ENCODE measurements at regions of chr9 and their contacts with region 1.

Region 1: GRCh38 chr9:105713260-105714019 is 19.1 kb downstream of the TMEM38B start:
- DNase-seq: no peak
- ATAC-seq: peak; percentile 18
- H3K4me3 ChIP-seq: no peak overlapping the region
- H3K4me3 Mint-ChIP-seq: no peak overlapping the region
- H3K27ac ChIP-seq: no peak overlapping the region
- H3K27ac Mint-ChIP-seq: no peak overlapping the region
- H3K4me1 ChIP-seq: no peaks in the 10 kb centered on the region
- H3K4me1 Mint-ChIP-seq: peaks cover 0 to 14% (median 4%) of the 10 kb centered on the region in 7 donors
- H3K27me3 ChIP-seq: no peaks in the 10 kb centered on the region
- H3K27me3 Mint-ChIP-seq: no peaks in the 10 kb centered on the region

Region 2: DNA sequence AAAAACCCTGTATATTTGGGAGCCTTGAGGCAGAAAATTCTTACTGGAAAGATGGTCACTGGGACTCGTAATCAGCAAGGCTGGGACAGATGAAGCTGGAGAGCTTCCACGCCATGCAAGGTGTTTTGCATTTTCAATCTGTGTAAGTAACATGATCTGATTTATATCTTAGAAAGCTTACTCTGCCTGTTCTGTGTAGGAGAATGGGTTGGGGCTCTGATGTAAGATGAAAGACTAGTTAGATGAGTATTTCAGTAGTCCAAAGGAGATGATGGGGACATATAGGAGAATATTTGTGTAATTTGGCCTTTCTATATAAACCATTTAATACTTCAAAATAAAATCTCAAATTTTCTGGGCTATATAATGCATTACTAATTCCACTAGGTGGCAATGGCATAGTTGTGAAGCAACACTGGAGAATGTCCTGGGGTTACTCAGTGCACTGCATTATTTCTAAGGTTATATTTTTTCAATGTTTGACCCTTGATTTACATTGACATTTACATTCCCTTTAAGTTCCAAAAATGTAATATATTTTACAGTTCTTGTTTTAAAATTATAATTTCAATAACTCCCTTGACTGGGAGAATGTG is 287.5 kb before region 1 on chr9:
- CTCF ChIA-PET with region 1: no interaction called
- POLR2A ChIA-PET with region 1: no interaction called
- intact Hi-C with region 1: loop called (anchors 1 kb)
- DNase-seq: no peak
- ATAC-seq: no peak
- H3K4me3 ChIP-seq: no peak overlapping the region
- H3K4me3 Mint-ChIP-seq: no peak overlapping the region
- H3K27ac ChIP-seq: no peak overlapping the region
- H3K27ac Mint-ChIP-seq: no peak overlapping the region
- H3K4me1 ChIP-seq: no peaks in the 10 kb centered on the region
- H3K4me1 Mint-ChIP-seq: no peaks in the 10 kb centered on the region
- H3K27me3 ChIP-seq: no peaks in the 10 kb centered on the region
- H3K27me3 Mint-ChIP-seq: peaks cover 0 to 4% (median 0%) of the 10 kb centered on the region in 5 donors

Region 3: DNA sequence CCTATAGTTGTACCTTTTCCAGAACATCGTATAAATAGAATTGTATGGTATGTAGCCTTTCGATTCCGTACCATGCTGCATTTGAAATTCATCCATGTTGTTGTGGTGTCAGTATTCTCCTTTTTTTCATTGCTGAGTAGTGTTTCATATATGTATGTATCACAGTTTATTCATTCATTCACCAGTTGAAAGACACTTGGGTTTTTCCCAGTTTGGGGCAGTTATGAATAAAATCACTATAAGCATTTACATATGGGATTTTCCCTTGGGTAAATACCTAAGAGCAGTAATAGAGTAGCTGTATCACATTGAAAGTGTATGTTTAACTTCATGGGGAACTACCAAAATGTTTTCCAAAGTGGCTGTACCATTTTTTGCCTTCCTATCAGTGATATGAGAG is 171.6 kb before region 1 on chr9:
- CTCF ChIA-PET with region 1: no interaction called
- POLR2A ChIA-PET with region 1: no interaction called
- intact Hi-C with region 1: no loop called
- DNase-seq: no peak
- ATAC-seq: no peak
- H3K4me3 ChIP-seq: no peak overlapping the region
- H3K4me3 Mint-ChIP-seq: no peak overlapping the region
- H3K27ac ChIP-seq: no peak overlapping the region
- H3K27ac Mint-ChIP-seq: no peak overlapping the region
- H3K4me1 ChIP-seq: no peaks in the 10 kb centered on the region
- H3K4me1 Mint-ChIP-seq: peaks cover 0 to 3% (median 0%) of the 10 kb centered on the region in 7 donors
- H3K27me3 ChIP-seq: no peaks in the 10 kb centered on the region
- H3K27me3 Mint-ChIP-seq: no peaks in the 10 kb centered on the region

Region 4: GRCh38 chr9:105608721-105609598 is 104.5 kb before region 1 on chr9:
- CTCF ChIA-PET with region 1: interaction called, 13 read pairs
- POLR2A ChIA-PET with region 1: interaction called, 4 read pairs
- intact Hi-C with region 1: loop called (anchors 1 kb)
- DNase-seq: peak in 6 of 9 donors; percentile 11 to 37 (median 30)
- ATAC-seq: peak; percentile 67
- H3K4me3 ChIP-seq: no peak overlapping the region
- H3K4me3 Mint-ChIP-seq: no peak overlapping the region
- H3K27ac ChIP-seq: no peak overlapping the region
- H3K27ac Mint-ChIP-seq: no peak overlapping the region
- H3K4me1 ChIP-seq: no peaks in the 10 kb centered on the region
- H3K4me1 Mint-ChIP-seq: peaks cover 0 to 5% (median 0%) of the 10 kb centered on the region in 7 donors
- H3K27me3 ChIP-seq: no peaks in the 10 kb centered on the region
- H3K27me3 Mint-ChIP-seq: no peaks in the 10 kb centered on the region

Region 5: GRCh38 chr9:105637787-105638395 is 75.5 kb before region 1 on chr9:
- CTCF ChIA-PET with region 1: interaction called, 5 read pairs
- POLR2A ChIA-PET with region 1: no interaction called
- intact Hi-C with region 1: loop called in 1 of 2 experiments (anchors 2 kb)
- DNase-seq: no peak
- ATAC-seq: no peak
- H3K4me3 ChIP-seq: no peak overlapping the region
- H3K4me3 Mint-ChIP-seq: no peak overlapping the region
- H3K27ac ChIP-seq: no peak overlapping the region
- H3K27ac Mint-ChIP-seq: no peak overlapping the region
- H3K4me1 ChIP-seq: no peaks in the 10 kb centered on the region
- H3K4me1 Mint-ChIP-seq: no peaks in the 10 kb centered on the region
- H3K27me3 ChIP-seq: no peaks in the 10 kb centered on the region
- H3K27me3 Mint-ChIP-seq: no peaks in the 10 kb centered on the region

Region 6: DNA sequence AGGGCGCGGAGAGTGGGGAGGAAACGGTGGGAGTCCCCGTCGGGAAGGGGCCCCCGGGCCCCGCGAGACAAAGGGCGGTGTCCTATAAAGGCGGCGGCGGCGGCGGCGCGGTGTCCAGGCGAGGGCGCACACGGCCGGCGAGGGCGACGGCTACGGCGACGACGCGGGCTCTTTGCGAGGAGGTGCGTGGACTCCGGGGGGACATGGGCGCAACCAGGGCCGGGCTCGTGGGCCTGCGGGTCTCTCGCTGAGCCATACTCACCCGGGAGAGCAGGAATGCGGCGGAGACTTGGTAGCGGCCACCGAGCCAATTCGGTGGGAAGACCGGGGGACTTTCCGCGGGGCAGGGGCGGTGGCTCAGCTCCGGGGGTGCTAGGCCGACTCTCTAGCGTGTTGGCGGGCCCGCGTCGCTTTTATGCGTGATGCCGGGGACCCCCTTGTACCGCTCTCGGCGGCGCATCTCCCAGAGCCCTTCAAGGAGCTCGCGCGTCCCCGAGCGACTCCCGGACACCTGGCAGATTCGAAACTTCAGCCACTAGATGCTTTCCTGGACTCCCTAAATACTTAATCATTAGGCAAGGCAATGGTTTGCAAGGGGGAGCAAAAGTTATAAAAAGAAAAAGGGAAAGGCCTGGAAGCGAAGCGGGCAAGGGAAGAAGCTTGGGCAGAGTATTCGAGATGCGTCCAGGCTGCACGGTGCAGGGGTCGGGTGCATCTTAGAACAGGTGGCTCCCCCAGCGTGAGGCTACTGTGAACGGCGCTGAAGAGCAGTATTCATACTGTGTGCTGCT is 57.1 kb before region 1 on chr9:
- CTCF ChIA-PET with region 1: no interaction called
- POLR2A ChIA-PET with region 1: no interaction called
- intact Hi-C with region 1: loop called (anchors 1 kb)
- DNase-seq: no peak
- ATAC-seq: peak; percentile 61
- H3K4me3 ChIP-seq: no peak overlapping the region
- H3K4me3 Mint-ChIP-seq: peak overlapping the region; percentile 64 to 89 (median 79)
- H3K27ac ChIP-seq: no peak overlapping the region
- H3K27ac Mint-ChIP-seq: peak overlapping the region in 1 of 9 donors; percentile 62
- H3K4me1 ChIP-seq: peaks cover 0 to 11% of the 10 kb centered on the region in 2 donors
- H3K4me1 Mint-ChIP-seq: peaks cover 7 to 15% (median 9%) of the 10 kb centered on the region in 7 donors
- H3K27me3 ChIP-seq: peaks cover 0 to 11% of the 10 kb centered on the region in 2 donors
- H3K27me3 Mint-ChIP-seq: peaks cover 34 to 47% (median 42%) of the 10 kb centered on the region in 5 donors

Region 7: DNA sequence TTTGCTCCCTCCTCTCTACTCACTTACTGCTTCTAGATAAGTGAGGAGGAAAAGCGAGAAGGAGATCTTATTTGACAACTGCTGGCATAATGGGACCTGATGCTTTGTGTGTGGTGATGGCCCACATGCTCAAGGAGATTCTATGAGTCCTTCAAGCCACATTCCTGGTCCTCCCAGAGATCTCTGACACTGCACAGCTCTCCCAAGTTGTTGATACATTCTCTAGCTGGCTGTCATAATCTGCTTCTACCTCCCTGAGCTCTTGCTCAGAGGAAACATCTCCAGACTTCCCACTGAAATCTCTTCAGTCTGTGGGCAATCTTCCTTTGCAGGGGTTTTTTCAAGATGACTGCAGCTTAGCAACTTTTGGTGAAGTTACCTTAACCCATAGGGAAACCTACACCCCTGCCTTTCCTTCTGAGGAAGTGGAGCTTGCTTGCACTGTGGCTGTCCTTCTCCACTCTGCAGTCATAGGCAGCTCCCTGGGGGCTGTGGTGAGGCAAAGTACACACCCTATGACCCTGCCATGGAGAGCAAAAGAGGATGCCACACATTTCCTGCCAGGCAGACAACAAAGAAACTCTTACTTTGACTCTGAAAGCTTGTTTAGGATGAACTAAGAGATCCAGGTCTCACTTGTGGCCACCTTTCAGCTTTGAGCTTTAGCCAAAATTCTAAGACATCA is 144.7 kb after region 1 on chr9:
- CTCF ChIA-PET with region 1: no interaction called
- POLR2A ChIA-PET with region 1: no interaction called
- intact Hi-C with region 1: no loop called
- DNase-seq: peak in 6 of 9 donors; percentile 8 to 52 (median 26)
- ATAC-seq: peak; percentile 64
- H3K4me3 ChIP-seq: no peak overlapping the region
- H3K4me3 Mint-ChIP-seq: peak overlapping the region in 9 of 10 donors; percentile 4 to 80 (median 18)
- H3K27ac ChIP-seq: no peak overlapping the region
- H3K27ac Mint-ChIP-seq: peak overlapping the region; percentile 6 to 82 (median 58)
- H3K4me1 ChIP-seq: peaks cover 0 to 21% of the 10 kb centered on the region in 2 donors
- H3K4me1 Mint-ChIP-seq: peaks cover 23 to 34% (median 33%) of the 10 kb centered on the region in 7 donors
- H3K27me3 ChIP-seq: no peaks in the 10 kb centered on the region
- H3K27me3 Mint-ChIP-seq: peaks cover 0 to 13% (median 0%) of the 10 kb centered on the region in 5 donors

Region 8: GRCh38 chr9:106420511-106420944 is 707.1 kb after region 1 on chr9:
- CTCF ChIA-PET with region 1: no interaction called
- POLR2A ChIA-PET with region 1: no interaction called
- intact Hi-C with region 1: no loop called
- DNase-seq: no peak
- ATAC-seq: peak; percentile 37
- H3K4me3 ChIP-seq: no peak overlapping the region
- H3K4me3 Mint-ChIP-seq: peak overlapping the region in 1 of 10 donors; percentile 12
- H3K27ac ChIP-seq: no peak overlapping the region
- H3K27ac Mint-ChIP-seq: no peak overlapping the region
- H3K4me1 ChIP-seq: no peaks in the 10 kb centered on the region
- H3K4me1 Mint-ChIP-seq: peaks cover 0 to 11% (median 0%) of the 10 kb centered on the region in 7 donors
- H3K27me3 ChIP-seq: no peaks in the 10 kb centered on the region
- H3K27me3 Mint-ChIP-seq: peaks cover 0 to 4% (median 0%) of the 10 kb centered on the region in 5 donors

Measured in naive thymus-derived CD4-positive, alpha-beta T cell (primary cell).